ENCODE measurements at regions of chr1 and their contacts with region 1.

Region 1: DNA sequence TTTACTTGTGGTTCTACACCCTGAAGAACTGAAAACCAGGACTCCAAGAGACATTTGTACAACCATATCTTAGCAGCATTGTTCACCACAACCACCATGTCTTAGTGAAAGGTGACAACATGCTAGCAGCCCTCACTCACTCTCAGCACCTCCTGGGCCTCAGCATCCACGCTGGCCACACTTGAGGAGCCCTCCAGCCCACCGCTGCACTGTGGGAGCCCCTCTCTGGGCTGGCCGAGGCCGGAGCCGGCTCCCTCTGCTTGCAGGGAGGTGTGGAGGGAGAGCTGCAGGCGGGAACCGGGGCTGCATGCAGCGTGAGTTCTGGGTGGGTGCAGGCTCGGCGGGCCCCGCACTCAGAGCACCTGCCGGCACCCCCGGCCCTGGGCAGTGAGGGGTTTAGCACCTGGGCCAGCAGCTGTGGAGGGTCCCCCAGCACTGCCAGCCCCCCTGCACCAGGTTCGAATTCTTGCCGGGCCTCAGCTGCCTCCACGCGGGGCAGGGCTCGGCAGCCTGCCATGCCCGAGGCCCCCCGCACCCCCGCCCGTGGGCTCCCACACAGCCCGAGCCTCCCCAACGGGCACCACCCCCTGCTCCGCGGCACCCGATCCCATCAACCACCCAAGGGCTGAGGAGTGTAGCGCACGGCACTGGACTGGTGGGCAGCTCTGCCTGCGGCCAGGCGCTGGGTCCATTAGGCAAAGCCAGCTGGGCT is 9.2 kb downstream of the C1orf159 start:
- DNase-seq: no peak
- ATAC-seq: no peak
- H3K4me3 ChIP-seq: no peak overlapping the region
- H3K27ac ChIP-seq: no peak overlapping the region
- H3K4me1 ChIP-seq: no peaks in the 10 kb centered on the region
- H3K27me3 ChIP-seq: no peaks in the 10 kb centered on the region
- CTCF ChIP-seq: no peak
- POLR2A ChIP-seq: no peak

Region 2: DNA sequence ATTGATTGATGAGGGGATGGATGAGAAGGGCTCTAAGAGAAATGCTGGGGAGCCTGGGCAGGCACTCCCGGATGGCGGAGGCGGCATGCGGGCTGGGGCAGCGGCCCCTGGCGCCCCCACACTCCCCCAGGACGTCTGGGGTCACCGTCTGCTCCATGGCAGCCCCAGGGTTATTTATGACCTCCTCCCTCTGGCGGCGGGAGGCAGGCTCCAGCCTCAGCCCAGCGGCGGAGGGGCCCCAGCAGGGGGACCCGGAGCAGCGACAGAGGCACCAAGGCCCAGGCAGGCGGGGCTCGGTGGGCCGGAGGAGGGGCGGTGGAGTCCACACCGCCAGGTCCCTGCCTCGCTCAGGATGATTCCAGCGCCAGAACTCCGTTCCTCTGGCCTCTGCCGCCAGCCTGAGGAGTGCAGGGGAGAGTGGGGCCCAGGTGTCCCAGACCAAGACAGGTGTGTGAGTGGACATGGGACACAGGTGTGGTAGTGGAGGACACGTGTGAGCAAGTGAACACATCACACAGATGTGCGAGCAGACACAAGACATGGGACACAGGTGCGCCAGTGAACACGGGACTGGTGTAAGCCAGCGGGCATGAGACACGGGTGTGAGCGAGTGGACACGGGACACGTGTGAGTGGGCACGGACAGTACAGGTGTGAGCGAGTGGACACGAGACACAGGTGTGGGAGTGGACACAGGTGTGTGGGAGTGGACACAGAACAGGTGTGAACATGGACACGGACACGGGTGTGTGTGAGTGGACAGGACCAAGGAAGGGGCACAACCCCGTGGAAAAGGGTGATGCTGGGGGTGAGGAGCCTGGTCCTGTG is 185.4 kb before region 1 on chr1:
- in situ Hi-C with region 1: no loop called
- intact Hi-C with region 1: loop called (anchors 2 kb)
- DNase-seq: peak in 1 of 2 donors; percentile 51
- ATAC-seq: peak; percentile 59 to 60
- H3K4me3 ChIP-seq: peak overlapping the region in 1 of 4 donors; percentile 7
- H3K27ac ChIP-seq: no peak overlapping the region
- H3K4me1 ChIP-seq: peaks cover 15 to 32% of the 10 kb centered on the region in 2 donors
- H3K27me3 ChIP-seq: peaks cover 16 to 52% (median 25%) of the 10 kb centered on the region in 3 donors
- CTCF ChIP-seq: peak; percentile 34 to 74 (median 55)
- POLR2A ChIP-seq: no peak